A549 (cell line): ENCODE measurements at regions of chr6 and their contacts with region 1.

Region 1: GRCh38 chr6:114062199-114062598 is 91.3 kb upstream of the HDAC2 start:
- DNase-seq: no peak
- ATAC-seq: no peak
- H3K4me3 ChIP-seq: no peak overlapping the region
- H3K27ac ChIP-seq: no peak overlapping the region
- H3K4me1 ChIP-seq: no peaks in the 10 kb centered on the region
- CTCF ChIP-seq: no peak
- EP300 ChIP-seq: no peak
- POLR2A ChIP-seq: no peak
- RAD21 ChIP-seq: no peak

Region 2: GRCh38 chr6:113879186-113880096 is 182.8 kb before region 1 on chr6:
- CTCF ChIA-PET with region 1: no interaction called
- POLR2A ChIA-PET with region 1: no interaction called
- DNase-seq: peak; percentile 48 to 73
- ATAC-seq: peak; percentile 99
- H3K4me3 ChIP-seq: no peak overlapping the region
- H3K27ac ChIP-seq: peak overlapping the region; percentile 39 to 48; a peak in 3 of 6 replicates
- H3K4me1 ChIP-seq: peaks cover 30% of the 10 kb centered on the region; the same call in 2 of the 3 replicates
- CTCF ChIP-seq: peak; percentile 69
- EP300 ChIP-seq: no peak
- POLR2A ChIP-seq: no peak
- RAD21 ChIP-seq: peak; percentile 84

Region 3: DNA sequence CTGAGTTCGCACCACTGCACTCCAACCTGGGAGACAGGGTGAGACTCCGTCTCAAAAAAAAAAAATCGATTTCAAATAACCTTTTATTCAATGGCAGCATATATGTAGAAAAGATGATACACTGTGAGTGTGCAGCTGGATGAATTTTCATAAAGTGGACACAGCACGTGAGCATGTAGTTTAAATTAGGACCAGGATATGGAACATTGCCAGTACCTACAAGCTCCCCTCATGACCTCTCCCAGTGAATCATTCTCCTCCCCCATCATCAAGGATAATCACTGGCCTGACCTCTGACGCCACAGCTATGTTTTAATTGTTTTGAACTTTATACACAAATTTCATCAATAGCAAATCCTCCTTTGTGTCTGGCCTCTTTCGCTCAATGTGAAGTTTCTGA is 37.5 kb before region 1 on chr6:
- CTCF ChIA-PET with region 1: no interaction called
- POLR2A ChIA-PET with region 1: interaction called, 10 read pairs
- DNase-seq: no peak
- ATAC-seq: no peak
- H3K4me3 ChIP-seq: no peak overlapping the region
- H3K27ac ChIP-seq: no peak overlapping the region
- H3K4me1 ChIP-seq: no peaks in the 10 kb centered on the region
- CTCF ChIP-seq: no peak
- EP300 ChIP-seq: no peak
- POLR2A ChIP-seq: no peak
- RAD21 ChIP-seq: no peak

Region 4: DNA sequence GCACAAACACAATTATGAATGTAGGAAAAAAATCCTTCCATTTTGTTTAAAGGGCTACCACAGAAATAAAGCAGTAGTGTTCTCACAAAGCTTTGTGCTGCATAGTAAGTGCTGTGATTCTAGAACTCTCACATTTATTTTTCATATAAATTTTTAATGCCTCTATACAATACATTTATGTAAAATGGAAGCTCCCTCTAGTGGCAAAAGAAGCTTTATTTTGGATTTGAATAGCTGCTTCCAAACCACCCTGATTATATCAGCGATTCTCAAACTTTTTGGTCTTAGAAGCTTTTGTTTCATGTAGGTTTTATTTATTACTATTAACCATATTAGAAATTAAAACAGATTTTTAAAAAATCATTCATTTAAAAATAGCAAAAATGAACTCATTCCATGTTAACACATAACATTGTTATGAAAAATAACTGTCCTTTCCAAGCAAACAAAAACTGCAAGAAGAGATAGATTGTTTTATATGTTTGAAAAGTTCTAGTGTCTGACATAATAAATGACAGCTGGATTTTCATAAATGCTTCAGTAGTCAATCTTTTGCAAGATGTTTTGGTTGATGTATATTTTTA is 242.2 kb after region 1 on chr6:
- CTCF ChIA-PET with region 1: no interaction called
- POLR2A ChIA-PET with region 1: no interaction called
- DNase-seq: peak in 1 of 2 experiments; percentile 9
- ATAC-seq: no peak
- H3K4me3 ChIP-seq: no peak overlapping the region
- H3K27ac ChIP-seq: no peak overlapping the region
- H3K4me1 ChIP-seq: no peaks in the 10 kb centered on the region
- CTCF ChIP-seq: peak; percentile 49
- EP300 ChIP-seq: no peak
- POLR2A ChIP-seq: no peak
- RAD21 ChIP-seq: peak; percentile 10 to 34; a peak in 2 of 5 replicates